Lower leg skin (tissue), 4 donors: ENCODE measurements at regions of chrX and their contacts with region 1.

Region 1: GRCh38 chrX:79719568-79720231 is 294.9 kb upstream of the TBX22 start:
- DNase-seq: no peak
- H3K4me3 ChIP-seq: no peak overlapping the region
- CTCF ChIP-seq: no peak
- POLR2A ChIP-seq: no peak

Region 2: GRCh38 chrX:80721185-80721584 is 1001.5 kb after region 1 on chrX:
- intact Hi-C with region 1: loop called (anchors 5 kb)
- DNase-seq: no peak
- H3K4me3 ChIP-seq: no peak overlapping the region
- CTCF ChIP-seq: no peak
- POLR2A ChIP-seq: no peak